GM12878 (cell line): ENCODE measurements at regions of chr10 and their contacts with region 1.

Region 1: DNA sequence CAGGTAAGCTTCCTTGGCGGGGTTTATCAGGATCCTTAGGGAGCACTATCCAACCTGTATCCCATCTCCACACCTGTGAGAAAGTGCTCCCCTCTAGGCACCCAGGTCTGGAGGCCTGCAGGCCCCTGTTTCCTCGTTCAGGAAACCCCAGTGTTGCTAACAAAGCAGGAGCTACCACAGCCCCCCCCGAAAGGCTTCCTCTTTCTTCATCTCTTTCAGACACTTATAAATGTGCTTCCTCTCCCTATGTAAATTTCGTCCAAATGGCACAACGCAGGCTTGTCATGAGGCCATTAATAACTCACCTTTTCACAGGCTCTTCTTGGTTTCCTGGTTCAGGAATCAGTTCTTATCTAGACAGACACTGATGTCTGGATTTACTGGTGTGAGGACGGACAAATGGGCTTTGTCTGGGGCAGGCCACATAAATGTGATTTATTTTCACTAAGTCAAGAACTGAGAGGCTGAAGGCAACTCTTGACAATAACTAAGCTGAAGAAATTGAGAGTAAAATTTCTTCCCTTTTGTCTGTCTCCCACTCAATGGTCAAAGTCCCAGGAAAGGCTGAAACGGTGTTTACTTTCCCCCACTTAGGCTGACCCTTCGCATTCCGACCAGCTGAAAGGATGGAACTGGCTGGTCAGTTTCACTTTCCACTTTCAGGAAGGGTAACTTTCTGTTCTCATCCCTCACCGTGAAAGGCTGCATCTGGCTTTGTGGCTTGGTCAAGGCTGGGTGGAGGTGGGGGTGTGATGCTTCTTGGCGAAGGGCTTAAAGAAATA is 46.8 kb downstream of the PIK3AP1 start:
- DNase-seq: peak; percentile 67
- ATAC-seq: peak; percentile 80
- H3K4me3 ChIP-seq: peak overlapping the region; percentile 54; the same call in 1 of the 2 replicates
- H3K27ac ChIP-seq: peak overlapping the region; percentile 40
- H3K4me1 ChIP-seq: peaks cover 79% of the 10 kb centered on the region
- H3K27me3 ChIP-seq: no peaks in the 10 kb centered on the region
- CTCF ChIP-seq: no peak
- EP300 ChIP-seq: peak in 1 of 2 experiments; percentile 8; a peak in 1 of 4 replicates
- POLR2A ChIP-seq: no peak
- RAD21 ChIP-seq: no peak

Region 2: DNA sequence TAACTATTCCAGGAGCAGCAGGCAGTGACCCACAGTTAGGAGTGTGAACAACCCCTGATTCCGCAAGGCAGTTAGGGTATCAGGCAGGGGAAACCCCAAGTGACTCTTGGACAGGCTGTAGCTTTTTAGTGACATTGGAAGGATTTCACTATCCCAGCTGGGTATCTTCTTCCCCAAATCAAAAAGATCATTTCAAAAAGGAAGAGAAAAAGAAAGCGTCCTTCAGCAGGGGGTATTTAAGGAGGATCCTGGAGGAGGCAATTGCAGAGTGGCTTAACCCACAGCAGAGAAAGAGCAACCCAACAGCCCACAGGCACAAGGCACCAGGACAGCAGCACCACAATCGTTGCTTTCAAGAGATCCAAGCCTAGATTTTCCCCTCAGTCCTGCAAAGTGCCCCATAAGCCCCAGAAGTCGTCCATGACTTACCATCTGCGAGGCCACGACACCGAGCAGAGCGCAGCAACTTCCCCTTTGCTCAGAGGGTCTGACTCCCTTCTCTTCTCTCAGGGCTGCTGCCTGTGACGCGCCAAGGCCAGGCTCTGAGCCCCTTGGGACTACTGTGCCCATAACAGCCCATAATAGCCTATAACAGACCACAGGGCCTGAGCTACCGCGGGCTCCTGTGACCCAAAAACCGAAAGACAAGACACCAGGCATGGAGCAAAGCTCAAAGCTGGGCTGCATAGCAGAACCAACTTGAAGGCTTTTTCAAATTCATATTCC is 27.0 kb after region 1 on chr10:
- CTCF ChIA-PET with region 1: interaction called, 5 read pairs
- POLR2A ChIA-PET with region 1: interaction called, 57 read pairs
- RAD21 ChIA-PET with region 1: interaction called, 12 read pairs
- SMC1A ChIA-PET with region 1: interaction called, 44 read pairs
- in situ Hi-C with region 1: no loop called
- intact Hi-C with region 1: no loop called
- DNase-seq: no peak
- ATAC-seq: peak; percentile 78
- H3K4me3 ChIP-seq: peak overlapping the region; percentile 82
- H3K27ac ChIP-seq: peak overlapping the region; percentile 85
- H3K4me1 ChIP-seq: peaks cover 45% of the 10 kb centered on the region
- H3K27me3 ChIP-seq: no peaks in the 10 kb centered on the region
- CTCF ChIP-seq: no peak
- EP300 ChIP-seq: peak; percentile 59 to 79; a peak in 2 of 4 replicates
- POLR2A ChIP-seq: peak; percentile 87
- RAD21 ChIP-seq: no peak

Region 3: DNA sequence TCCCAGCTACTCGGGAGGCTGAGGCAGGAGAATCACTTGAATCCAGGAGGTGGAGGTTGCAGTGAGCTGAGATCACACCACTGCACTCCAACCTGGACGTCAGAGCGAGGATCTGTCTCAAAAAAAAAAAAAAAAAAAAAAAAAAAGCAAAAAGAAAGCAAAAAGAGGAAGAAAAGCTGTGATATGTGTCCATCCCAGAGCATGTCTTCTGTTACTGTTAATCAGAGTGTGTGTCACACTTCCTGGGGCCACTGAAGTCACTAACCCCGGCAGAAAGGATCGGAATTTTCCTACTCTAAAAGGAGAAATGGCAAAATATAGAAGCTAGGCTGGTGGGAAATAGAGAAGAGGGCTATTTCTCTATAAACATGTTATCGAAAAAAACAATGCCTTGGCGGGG is 34.9 kb after region 1 on chr10:
- CTCF ChIA-PET with region 1: interaction called, 3 read pairs
- POLR2A ChIA-PET with region 1: interaction called, 11 read pairs
- RAD21 ChIA-PET with region 1: interaction called, 5 read pairs
- SMC1A ChIA-PET with region 1: interaction called, 9 read pairs
- in situ Hi-C with region 1: no loop called
- intact Hi-C with region 1: no loop called
- DNase-seq: no peak
- ATAC-seq: peak; percentile 43
- H3K4me3 ChIP-seq: peak overlapping the region; percentile 62; the same call in 1 of the 2 replicates
- H3K27ac ChIP-seq: peak overlapping the region; percentile 61
- H3K4me1 ChIP-seq: peaks cover 37% of the 10 kb centered on the region
- H3K27me3 ChIP-seq: no peaks in the 10 kb centered on the region
- CTCF ChIP-seq: no peak
- EP300 ChIP-seq: no peak
- POLR2A ChIP-seq: no peak
- RAD21 ChIP-seq: no peak

Region 4: GRCh38 chr10:96814264-96814663 is 140.8 kb after region 1 on chr10:
- CTCF ChIA-PET with region 1: no interaction called
- POLR2A ChIA-PET with region 1: no interaction called
- RAD21 ChIA-PET with region 1: no interaction called
- SMC1A ChIA-PET with region 1: no interaction called
- in situ Hi-C with region 1: no loop called
- intact Hi-C with region 1: no loop called
- DNase-seq: no peak
- ATAC-seq: no peak
- H3K4me3 ChIP-seq: no peak overlapping the region
- H3K27ac ChIP-seq: no peak overlapping the region
- H3K4me1 ChIP-seq: no peaks in the 10 kb centered on the region
- H3K27me3 ChIP-seq: no peaks in the 10 kb centered on the region
- CTCF ChIP-seq: no peak
- EP300 ChIP-seq: no peak
- POLR2A ChIP-seq: no peak
- RAD21 ChIP-seq: no peak

Region 5: GRCh38 chr10:96840841-96841518 is 167.5 kb after region 1 on chr10:
- CTCF ChIA-PET with region 1: no interaction called
- POLR2A ChIA-PET with region 1: no interaction called
- RAD21 ChIA-PET with region 1: no interaction called
- SMC1A ChIA-PET with region 1: no interaction called
- in situ Hi-C with region 1: no loop called
- intact Hi-C with region 1: no loop called
- DNase-seq: no peak
- ATAC-seq: peak; percentile 58
- H3K4me3 ChIP-seq: no peak overlapping the region
- H3K27ac ChIP-seq: no peak overlapping the region
- H3K4me1 ChIP-seq: peaks cover 5% of the 10 kb centered on the region
- H3K27me3 ChIP-seq: no peaks in the 10 kb centered on the region
- CTCF ChIP-seq: no peak
- EP300 ChIP-seq: no peak
- POLR2A ChIP-seq: no peak
- RAD21 ChIP-seq: no peak